ENCODE measurements at regions of chr3 and their contacts with region 1.

Region 1: GRCh38 chr3:172341482-172342059 is 106.7 kb downstream of the GHSR start:
- DNase-seq: peak in 5 of 14 experiments; percentile 3 to 75 (median 70)
- ATAC-seq: peak; percentile 68
- H3K4me3 ChIP-seq: no peak overlapping the region
- H3K4me3 Mint-ChIP-seq: no peak overlapping the region
- H3K27ac ChIP-seq: no peak overlapping the region
- H3K27ac Mint-ChIP-seq: no peak overlapping the region
- H3K4me1 ChIP-seq: no peaks in the 10 kb centered on the region
- H3K4me1 Mint-ChIP-seq: no peaks in the 10 kb centered on the region
- H3K27me3 ChIP-seq: no peaks in the 10 kb centered on the region
- H3K27me3 Mint-ChIP-seq: no peaks in the 10 kb centered on the region
- CTCF ChIP-seq: peak; percentile 77

Region 2: DNA sequence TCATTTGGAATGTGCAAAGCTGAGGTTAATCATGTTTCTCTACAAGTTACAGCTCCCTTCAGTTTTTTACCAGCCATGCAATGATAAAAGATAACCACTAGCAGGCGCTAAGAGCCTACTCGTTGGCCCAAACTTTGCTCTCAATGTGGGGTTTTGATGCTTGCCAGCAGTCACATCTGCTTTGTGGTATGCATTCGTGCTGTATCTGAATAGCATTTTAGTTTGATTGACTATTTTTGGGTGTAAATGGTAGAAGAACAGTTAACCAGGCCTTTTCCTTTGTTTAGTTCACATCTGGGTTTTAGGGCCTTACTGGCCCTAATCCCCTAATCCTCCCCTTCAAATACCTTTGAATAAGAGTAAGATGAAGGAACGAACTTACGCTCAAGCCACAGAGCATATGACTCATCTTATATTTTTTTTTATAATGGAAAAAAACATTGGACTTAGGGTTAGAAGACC is 1927.3 kb before region 1 on chr3:
- CTCF ChIA-PET with region 1: no interaction called
- POLR2A ChIA-PET with region 1: no interaction called
- intact Hi-C with region 1: loop called in 1 of 2 experiments (anchors 10 kb)
- DNase-seq: peak in 7 of 14 experiments; percentile 7 to 70 (median 45)
- ATAC-seq: peak; percentile 78
- H3K4me3 ChIP-seq: no peak overlapping the region
- H3K4me3 Mint-ChIP-seq: no peak overlapping the region
- H3K27ac ChIP-seq: no peak overlapping the region
- H3K27ac Mint-ChIP-seq: no peak overlapping the region
- H3K4me1 ChIP-seq: peaks cover 10% of the 10 kb centered on the region
- H3K4me1 Mint-ChIP-seq: peaks cover 5% of the 10 kb centered on the region
- H3K27me3 ChIP-seq: peaks cover 13 to 14% of the 10 kb centered on the region in 2 experiments
- H3K27me3 Mint-ChIP-seq: peaks cover 40% of the 10 kb centered on the region
- CTCF ChIP-seq: peak; percentile 81

Region 3: DNA sequence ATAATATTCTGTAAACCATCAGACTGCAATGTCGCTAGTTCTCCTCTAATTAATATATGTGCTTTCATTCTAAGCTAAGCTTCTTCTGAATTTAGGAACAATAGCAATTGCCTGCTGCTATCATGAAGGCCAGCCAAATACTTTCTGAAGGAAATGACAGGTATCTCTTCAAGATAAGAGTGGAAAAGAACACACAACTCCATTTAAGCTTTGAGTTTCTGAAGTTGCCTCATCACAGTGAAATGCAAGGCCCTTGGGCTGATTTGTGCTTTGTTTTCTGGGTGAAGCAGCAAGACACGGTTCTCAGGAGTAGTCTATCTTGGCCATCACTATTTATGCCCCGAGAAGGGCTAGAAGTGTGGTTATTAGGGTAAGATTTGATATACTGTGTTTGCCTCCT is 1761.9 kb before region 1 on chr3:
- CTCF ChIA-PET with region 1: no interaction called
- POLR2A ChIA-PET with region 1: no interaction called
- intact Hi-C with region 1: no loop called
- DNase-seq: no peak
- ATAC-seq: no peak
- H3K4me3 ChIP-seq: no peak overlapping the region
- H3K4me3 Mint-ChIP-seq: no peak overlapping the region
- H3K27ac ChIP-seq: no peak overlapping the region
- H3K27ac Mint-ChIP-seq: no peak overlapping the region
- H3K4me1 ChIP-seq: peaks cover 2% of the 10 kb centered on the region
- H3K4me1 Mint-ChIP-seq: no peaks in the 10 kb centered on the region
- H3K27me3 ChIP-seq: peaks cover 11 to 26% of the 10 kb centered on the region in 2 experiments
- H3K27me3 Mint-ChIP-seq: peaks cover 62% of the 10 kb centered on the region
- CTCF ChIP-seq: no peak

Region 4: GRCh38 chr3:171646357-171647133 is 695.0 kb before region 1 on chr3:
- CTCF ChIA-PET with region 1: interaction called, 6 read pairs
- POLR2A ChIA-PET with region 1: no interaction called
- intact Hi-C with region 1: loop called in 1 of 2 experiments (anchors 2 kb)
- DNase-seq: peak in 3 of 14 experiments; percentile 27 to 37 (median 32)
- ATAC-seq: no peak
- H3K4me3 ChIP-seq: no peak overlapping the region
- H3K4me3 Mint-ChIP-seq: no peak overlapping the region
- H3K27ac ChIP-seq: no peak overlapping the region
- H3K27ac Mint-ChIP-seq: no peak overlapping the region
- H3K4me1 ChIP-seq: no peaks in the 10 kb centered on the region
- H3K4me1 Mint-ChIP-seq: no peaks in the 10 kb centered on the region
- H3K27me3 ChIP-seq: no peaks in the 10 kb centered on the region
- H3K27me3 Mint-ChIP-seq: no peaks in the 10 kb centered on the region
- CTCF ChIP-seq: peak; percentile 29

Region 5: DNA sequence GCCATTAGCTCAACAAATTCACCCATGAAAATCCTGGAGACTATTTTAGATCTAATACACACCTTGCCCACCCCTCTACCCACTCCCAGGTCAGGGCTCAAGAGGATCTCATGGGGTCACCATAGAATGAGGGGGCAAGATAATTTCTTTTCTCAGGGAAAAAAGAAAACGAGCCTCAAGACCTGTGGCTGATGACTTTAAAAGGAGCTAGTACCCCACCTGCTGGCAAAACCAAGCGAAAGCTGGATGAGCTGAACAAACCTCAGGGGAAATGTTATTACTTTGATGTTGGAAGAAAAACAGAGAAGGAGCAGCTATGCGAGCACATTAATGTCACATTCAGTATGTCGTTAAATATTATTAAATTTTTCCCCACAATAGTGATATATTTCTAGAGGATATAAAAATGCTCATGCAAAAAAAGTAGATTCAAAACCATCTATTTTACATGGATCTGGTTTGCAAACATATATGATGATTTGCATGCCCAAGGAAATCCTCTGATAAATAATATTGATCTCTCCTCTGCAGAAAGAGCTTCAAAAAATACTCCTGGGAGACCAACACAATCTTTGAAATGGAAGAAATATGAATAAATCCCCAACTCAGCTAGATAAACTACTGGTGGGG is 569.0 kb before region 1 on chr3:
- CTCF ChIA-PET with region 1: no interaction called
- POLR2A ChIA-PET with region 1: no interaction called
- intact Hi-C with region 1: loop called in 1 of 2 experiments (anchors 5 kb)
- DNase-seq: peak; percentile 6 to 66 (median 27)
- ATAC-seq: no peak
- H3K4me3 ChIP-seq: no peak overlapping the region
- H3K4me3 Mint-ChIP-seq: no peak overlapping the region
- H3K27ac ChIP-seq: no peak overlapping the region
- H3K27ac Mint-ChIP-seq: no peak overlapping the region
- H3K4me1 ChIP-seq: no peaks in the 10 kb centered on the region
- H3K4me1 Mint-ChIP-seq: no peaks in the 10 kb centered on the region
- H3K27me3 ChIP-seq: no peaks in the 10 kb centered on the region
- H3K27me3 Mint-ChIP-seq: peaks cover 8% of the 10 kb centered on the region
- CTCF ChIP-seq: peak; percentile 72

Region 6: GRCh38 chr3:172039436-172040077 is 302.0 kb before region 1 on chr3 and contains the start of gene FNDC3B:
- CTCF ChIA-PET with region 1: interaction called, 5 read pairs
- POLR2A ChIA-PET with region 1: no interaction called
- intact Hi-C with region 1: loop called (anchors 2 to 5 kb)
- DNase-seq: peak; percentile 81 to 96 (median 88)
- ATAC-seq: peak; percentile 93
- H3K4me3 ChIP-seq: peak within 1 kb of the TSS; percentile 91
- H3K4me3 Mint-ChIP-seq: peak within 1 kb of the TSS; percentile 100
- H3K27ac ChIP-seq: peak within 1 kb of the TSS; percentile 71 to 86
- H3K27ac Mint-ChIP-seq: peak within 1 kb of the TSS; percentile 92
- H3K4me1 ChIP-seq: peaks cover 25% of the 10 kb centered on the region
- H3K4me1 Mint-ChIP-seq: peaks cover 53% of the 10 kb centered on the region
- H3K27me3 ChIP-seq: no peaks in the 10 kb centered on the region
- H3K27me3 Mint-ChIP-seq: peaks cover 5% of the 10 kb centered on the region
- CTCF ChIP-seq: no peak
- total RNA-seq, gene FNDC3B: 26.1 to 28.7 TPM